Heart left ventricle (tissue), 16 donors: ENCODE measurements at regions of chr9 and their contacts with region 1.

Region 1: GRCh38 chr9:26612211-26612610 is 280.4 kb downstream of the CAAP1 start:
- DNase-seq: no peak
- ATAC-seq: no peak
- H3K4me3 ChIP-seq: no peak overlapping the region
- H3K27ac ChIP-seq: no peak overlapping the region
- H3K4me1 ChIP-seq: no peaks in the 10 kb centered on the region
- H3K27me3 ChIP-seq: no peaks in the 10 kb centered on the region
- CTCF ChIP-seq: no peak
- POLR2A ChIP-seq: no peak

Region 2: DNA sequence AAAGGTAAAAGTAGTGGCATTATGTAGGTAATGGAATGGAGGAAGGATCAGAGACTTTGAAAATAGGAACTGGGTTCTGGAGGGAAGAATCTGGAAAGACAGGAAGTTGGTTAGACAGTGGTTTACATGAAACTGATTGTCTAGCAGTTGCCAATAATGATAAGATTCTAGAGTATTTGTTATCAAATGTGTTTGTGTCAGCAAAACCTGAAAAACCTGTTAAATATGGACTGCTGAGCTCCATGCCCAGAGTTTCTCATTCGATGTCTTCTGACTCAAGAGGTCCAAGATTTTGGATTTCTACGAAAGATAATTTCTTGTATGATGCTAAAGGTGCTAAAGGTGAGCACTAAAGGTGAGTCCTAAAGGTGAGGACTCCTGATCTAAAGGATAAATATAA is 419.0 kb before region 1 on chr9:
- intact Hi-C with region 1: no loop called
- DNase-seq: no peak
- ATAC-seq: no peak
- H3K4me3 ChIP-seq: no peak overlapping the region
- H3K27ac ChIP-seq: no peak overlapping the region
- H3K4me1 ChIP-seq: no peaks in the 10 kb centered on the region
- H3K27me3 ChIP-seq: no peaks in the 10 kb centered on the region
- CTCF ChIP-seq: no peak
- POLR2A ChIP-seq: no peak

Region 3: GRCh38 chr9:26669666-26670352 is 57.6 kb after region 1 on chr9:
- intact Hi-C with region 1: loop called in 1 of 10 experiments (anchors 5 kb)
- DNase-seq: no peak
- ATAC-seq: no peak
- H3K4me3 ChIP-seq: no peak overlapping the region
- H3K27ac ChIP-seq: no peak overlapping the region
- H3K4me1 ChIP-seq: no peaks in the 10 kb centered on the region
- H3K27me3 ChIP-seq: no peaks in the 10 kb centered on the region
- CTCF ChIP-seq: no peak
- POLR2A ChIP-seq: no peak